A673 (cell line): ENCODE measurements at regions of chr2 and their contacts with region 1.

Region 1: GRCh38 chr2:199940373-199940772 is 14.9 kb downstream of the TYW5 start:
- DNase-seq: peak; percentile 60
- H3K4me3 ChIP-seq: no peak overlapping the region
- H3K27ac ChIP-seq: no peak overlapping the region
- H3K4me1 ChIP-seq: no peaks in the 10 kb centered on the region
- H3K27me3 ChIP-seq: no peaks in the 10 kb centered on the region
- CTCF ChIP-seq: peak; percentile 46

Region 2: GRCh38 chr2:198309673-198310280 is 1630.6 kb before region 1 on chr2:
- CTCF ChIA-PET with region 1: no interaction called
- POLR2A ChIA-PET with region 1: no interaction called
- intact Hi-C with region 1: loop called (anchors 5 kb)
- DNase-seq: peak; percentile 72
- H3K4me3 ChIP-seq: no peak overlapping the region
- H3K27ac ChIP-seq: no peak overlapping the region
- H3K4me1 ChIP-seq: peaks cover 4% of the 10 kb centered on the region
- H3K27me3 ChIP-seq: peaks cover 5% of the 10 kb centered on the region
- CTCF ChIP-seq: peak; percentile 88

Region 3: GRCh38 chr2:199704358-199705238 is 235.8 kb before region 1 on chr2:
- CTCF ChIA-PET with region 1: interaction called, 4 read pairs
- POLR2A ChIA-PET with region 1: no interaction called
- intact Hi-C with region 1: loop called (anchors 5 kb)
- DNase-seq: peak; percentile 54
- H3K4me3 ChIP-seq: no peak overlapping the region
- H3K27ac ChIP-seq: no peak overlapping the region
- H3K4me1 ChIP-seq: no peaks in the 10 kb centered on the region
- H3K27me3 ChIP-seq: no peaks in the 10 kb centered on the region
- CTCF ChIP-seq: peak; percentile 76

Region 4: GRCh38 chr2:200021449-200022114 is 81.2 kb after region 1 on chr2:
- CTCF ChIA-PET with region 1: no interaction called
- POLR2A ChIA-PET with region 1: no interaction called
- intact Hi-C with region 1: no loop called
- DNase-seq: no peak
- H3K4me3 ChIP-seq: no peak overlapping the region
- H3K27ac ChIP-seq: no peak overlapping the region
- H3K4me1 ChIP-seq: no peaks in the 10 kb centered on the region
- H3K27me3 ChIP-seq: no peaks in the 10 kb centered on the region
- CTCF ChIP-seq: no peak

Region 5: GRCh38 chr2:200713003-200713703 is 772.8 kb after region 1 on chr2:
- CTCF ChIA-PET with region 1: no interaction called
- POLR2A ChIA-PET with region 1: no interaction called
- intact Hi-C with region 1: no loop called
- DNase-seq: peak; percentile 94
- H3K4me3 ChIP-seq: peak overlapping the region; percentile 29
- H3K27ac ChIP-seq: peak overlapping the region; percentile 60
- H3K4me1 ChIP-seq: no peaks in the 10 kb centered on the region
- H3K27me3 ChIP-seq: no peaks in the 10 kb centered on the region
- CTCF ChIP-seq: peak; percentile 80